Left colon (tissue), 2 donors: ENCODE measurements at regions of chr19 and their contacts with region 1.

Region 1: DNA sequence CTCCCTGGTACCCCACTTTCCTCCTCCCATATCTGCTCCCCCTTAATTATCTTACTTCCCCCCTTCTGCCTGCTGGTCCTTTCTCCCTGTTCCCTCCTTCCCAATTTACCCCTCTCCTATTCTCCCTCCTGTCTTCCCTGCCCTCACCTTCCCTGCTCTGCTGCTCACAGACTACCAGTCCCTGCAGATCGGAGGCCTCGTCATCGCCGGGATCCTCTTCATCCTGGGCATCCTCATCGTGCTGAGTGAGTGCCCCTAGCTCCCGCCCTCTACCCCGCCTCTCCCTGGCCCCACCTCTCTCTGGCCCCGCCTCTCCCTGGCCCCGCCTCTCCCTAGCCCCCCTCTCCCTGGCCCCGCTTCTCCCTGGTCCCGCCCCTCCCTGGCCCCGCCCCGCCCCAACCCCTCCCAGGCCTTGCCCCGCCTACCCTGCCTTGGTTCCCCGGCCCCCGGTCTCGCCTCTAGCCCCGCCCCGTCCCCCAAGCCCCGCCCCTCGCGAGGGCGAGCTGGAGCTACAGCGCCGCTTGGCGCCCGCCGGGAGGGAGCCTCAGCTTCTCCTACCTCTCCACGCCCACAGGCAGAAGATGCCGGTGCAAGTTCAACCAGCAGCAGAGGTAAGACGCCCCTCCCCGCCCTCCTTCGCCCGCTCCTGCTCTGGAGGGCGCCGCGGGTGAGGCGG is 2.0 kb upstream of the FXYD7 start:
- DNase-seq: peak; percentile 93 to 96
- ATAC-seq: peak; percentile 84

Region 2: DNA sequence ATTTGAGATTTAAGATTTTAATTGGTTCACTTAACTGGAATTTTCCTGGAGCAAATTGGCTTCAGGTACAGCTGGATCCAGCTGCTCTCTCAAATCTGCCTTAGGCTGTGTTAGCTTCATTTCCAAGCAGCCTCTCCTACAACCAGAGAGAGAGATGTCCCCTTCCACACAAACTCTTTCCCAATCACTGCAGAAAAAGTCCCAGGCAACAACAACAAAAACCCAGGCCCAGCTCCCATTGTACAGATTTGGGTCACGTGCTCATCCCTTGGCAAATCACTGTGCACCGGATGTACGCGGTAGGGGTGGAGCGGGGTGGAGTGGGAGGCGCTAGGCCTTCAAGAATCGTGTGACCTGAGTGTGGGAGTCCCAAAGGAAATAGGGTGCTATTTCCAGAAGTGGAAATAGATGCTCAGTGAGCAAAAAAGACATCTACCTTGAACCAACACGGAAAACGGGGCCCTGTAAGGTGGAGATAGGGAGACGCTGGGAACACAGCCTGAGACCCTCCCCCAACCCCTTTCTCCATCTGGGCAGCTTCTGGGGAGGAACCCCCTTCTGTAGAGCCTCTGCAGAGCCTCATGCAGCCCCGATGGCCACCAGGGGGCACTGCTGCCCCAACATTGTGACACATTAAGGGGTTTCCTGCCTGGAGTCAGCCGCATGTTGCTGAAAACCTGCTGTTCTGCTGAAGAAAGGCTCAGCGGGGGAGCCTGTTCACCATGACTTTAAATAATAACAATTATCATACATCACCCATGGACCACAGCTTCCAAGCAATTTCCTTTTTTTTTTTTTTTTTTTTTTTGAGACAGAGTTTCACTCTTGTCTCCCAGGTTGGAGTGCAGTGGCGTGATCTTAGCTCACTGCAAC is 74.2 kb before region 1 on chr19:
- intact Hi-C with region 1: loop called in 1 of 2 experiments (anchors 10 kb)
- DNase-seq: peak; percentile 80 to 96
- ATAC-seq: peak; percentile 95

Region 3: GRCh38 chr19:35090506-35091237 is 50.4 kb before region 1 on chr19:
- intact Hi-C with region 1: no loop called
- DNase-seq: peak in 1 of 2 donors; percentile 59
- ATAC-seq: peak; percentile 84

Region 4: GRCh38 chr19:35204799-35205732 is 64.0 kb after region 1 on chr19:
- intact Hi-C with region 1: no loop called
- DNase-seq: peak; percentile 47 to 54
- ATAC-seq: peak; percentile 50

Region 5: GRCh38 chr19:35247526-35248306 is 106.6 kb after region 1 on chr19:
- intact Hi-C with region 1: no loop called
- DNase-seq: peak; percentile 90 to 91
- ATAC-seq: peak; percentile 76

Region 6: GRCh38 chr19:35269421-35270117 is 128.5 kb after region 1 on chr19:
- intact Hi-C with region 1: loop called in 1 of 2 experiments (anchors 10 kb)
- DNase-seq: peak; percentile 84 to 93
- ATAC-seq: peak; percentile 57

Region 7: DNA sequence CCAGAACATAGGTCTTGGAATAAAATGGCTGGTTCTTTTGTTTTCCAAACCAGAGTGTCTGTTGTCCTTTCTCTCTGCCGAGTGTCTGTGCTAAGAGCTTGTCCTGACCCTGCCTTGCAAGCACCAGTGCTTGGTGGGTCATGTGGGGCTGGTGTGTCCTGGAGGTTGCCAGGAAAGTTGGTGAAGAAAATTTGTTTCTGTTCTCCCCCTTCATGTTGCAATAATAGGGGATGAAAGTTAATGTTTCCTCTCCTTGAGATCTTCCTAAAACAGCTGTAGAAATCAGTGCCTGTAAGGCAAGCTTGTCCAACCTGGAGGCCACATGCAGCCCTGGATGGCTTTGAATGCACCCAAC is 144.0 kb after region 1 on chr19:
- intact Hi-C with region 1: no loop called
- DNase-seq: no peak
- ATAC-seq: no peak